ENCODE measurements at regions of chr3 and their contacts with region 1.

Region 1: GRCh38 chr3:183375787-183376186 is 52.6 kb downstream of the MCF2L2 start:
- DNase-seq: no peak
- H3K4me3 ChIP-seq: no peak overlapping the region
- H3K27ac ChIP-seq: 0 out of 2 replicates have a peak overlapping the region, but pooled peaks have one; percentile 90
- H3K4me1 ChIP-seq: peaks cover 66% of the 10 kb centered on the region
- H3K27me3 ChIP-seq: no peaks in the 10 kb centered on the region
- CTCF ChIP-seq: no peak

Region 2: GRCh38 chr3:183317886-183318865 is 57.6 kb before region 1 on chr3:
- CTCF ChIA-PET with region 1: no interaction called
- POLR2A ChIA-PET with region 1: no interaction called
- intact Hi-C with region 1: loop called (anchors 1 kb)
- DNase-seq: peak in 1 of 2 experiments; percentile 84
- H3K4me3 ChIP-seq: no peak overlapping the region
- H3K27ac ChIP-seq: peak overlapping the region; percentile 71
- H3K4me1 ChIP-seq: peaks cover 55% of the 10 kb centered on the region
- H3K27me3 ChIP-seq: no peaks in the 10 kb centered on the region
- CTCF ChIP-seq: no peak